Naive thymus-derived CD4-positive, alpha-beta T cell (primary cell): ENCODE measurements at regions of chr3 and their contacts with region 1.

Region 1: DNA sequence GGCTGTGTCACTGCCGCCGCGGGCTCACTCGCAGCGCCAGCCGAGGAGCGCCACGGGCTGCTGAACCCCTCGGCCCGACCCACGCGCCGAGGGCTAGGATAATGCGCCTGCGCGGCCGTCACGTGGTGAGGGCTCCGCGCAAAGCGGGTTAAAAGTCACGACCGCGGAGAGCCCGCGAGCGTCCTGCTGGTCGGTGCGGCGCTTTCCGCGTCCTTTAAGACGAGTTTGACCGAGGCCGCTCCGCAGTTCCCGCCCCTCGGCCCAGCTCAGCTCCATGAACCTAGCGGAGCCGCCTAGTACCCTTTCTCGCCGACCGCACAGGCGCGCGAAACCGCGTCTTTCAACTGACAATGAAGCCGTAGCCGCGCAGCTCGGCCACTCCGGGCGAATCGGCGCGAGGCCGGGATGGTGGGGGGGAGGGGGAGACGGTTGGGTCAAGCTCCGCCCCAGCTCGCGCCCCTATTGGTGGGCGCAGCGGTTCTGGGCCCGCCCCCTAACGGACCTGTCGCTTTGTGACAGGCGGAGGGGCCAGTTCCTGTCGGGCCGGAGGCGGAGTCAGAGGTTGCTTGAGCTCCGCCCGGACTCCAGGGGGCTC is 636 bp upstream of the STT3B start:
- DNase-seq: peak; percentile 96 to 99 (median 98)
- ATAC-seq: peak; percentile 91
- H3K4me3 ChIP-seq: peak overlapping the region; percentile 76
- H3K4me3 Mint-ChIP-seq: peak overlapping the region in 7 of 10 donors; percentile 96 to 100 (median 98)
- H3K27ac ChIP-seq: peak overlapping the region; percentile 94
- H3K27ac Mint-ChIP-seq: peak overlapping the region; percentile 95 to 99 (median 98)
- H3K4me1 ChIP-seq: peaks cover 4 to 31% of the 10 kb centered on the region in 2 donors
- H3K4me1 Mint-ChIP-seq: peaks cover 0 to 25% (median 18%) of the 10 kb centered on the region in 7 donors
- H3K27me3 ChIP-seq: no peaks in the 10 kb centered on the region
- H3K27me3 Mint-ChIP-seq: no peaks in the 10 kb centered on the region

Region 2: DNA sequence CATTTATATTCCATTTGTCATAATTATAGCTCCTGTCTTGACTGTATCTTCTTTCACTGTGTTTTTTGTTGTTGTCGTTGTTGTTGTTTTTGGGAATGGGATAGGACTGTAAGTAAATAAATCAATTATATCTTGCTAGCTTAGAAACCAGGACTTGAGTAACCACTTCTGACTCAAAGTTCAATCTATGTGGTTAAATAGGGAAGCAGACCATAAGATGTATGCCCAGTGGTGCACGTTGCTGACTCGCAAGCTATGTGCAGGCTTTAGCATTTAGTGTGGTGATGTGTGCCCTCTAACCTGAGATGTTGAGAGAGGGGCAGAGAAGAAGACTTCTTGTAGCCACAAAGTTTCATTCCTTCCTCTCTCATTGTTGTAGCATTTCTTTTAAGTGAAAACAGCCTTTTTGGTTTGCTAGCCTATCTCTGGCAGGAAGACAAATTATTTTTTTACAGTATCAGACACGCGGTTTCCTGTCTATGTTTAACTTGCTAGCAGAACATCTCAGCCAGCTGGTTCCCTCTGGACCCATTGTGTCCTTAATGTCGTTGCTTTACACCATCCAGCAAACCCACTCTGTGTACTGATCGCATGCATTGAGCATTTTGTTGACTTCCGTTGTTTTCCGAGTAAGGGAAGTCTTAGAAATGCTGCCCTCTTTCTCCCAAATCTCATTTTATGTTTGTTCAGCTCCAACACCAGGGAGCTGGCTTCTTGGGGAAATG is 873.6 kb before region 1 on chr3:
- CTCF ChIA-PET with region 1: no interaction called
- POLR2A ChIA-PET with region 1: interaction called, 3 read pairs
- intact Hi-C with region 1: loop called (anchors 5 kb)
- DNase-seq: peak in 7 of 9 donors; percentile 72 to 86 (median 84)
- ATAC-seq: peak; percentile 71
- H3K4me3 ChIP-seq: peak overlapping the region; percentile 24
- H3K4me3 Mint-ChIP-seq: peak overlapping the region; percentile 71 to 88 (median 80)
- H3K27ac ChIP-seq: peak overlapping the region; percentile 84
- H3K27ac Mint-ChIP-seq: peak overlapping the region; percentile 91 to 99 (median 97)
- H3K4me1 ChIP-seq: peaks cover 82 to 98% of the 10 kb centered on the region in 2 donors
- H3K4me1 Mint-ChIP-seq: peaks cover 67 to 100% (median 94%) of the 10 kb centered on the region in 7 donors
- H3K27me3 ChIP-seq: no peaks in the 10 kb centered on the region
- H3K27me3 Mint-ChIP-seq: no peaks in the 10 kb centered on the region

Region 3: GRCh38 chr3:31377045-31377642 is 154.9 kb before region 1 on chr3:
- CTCF ChIA-PET with region 1: no interaction called
- POLR2A ChIA-PET with region 1: no interaction called
- intact Hi-C with region 1: loop called in 1 of 2 experiments (anchors 2 kb)
- DNase-seq: peak in 5 of 9 donors; percentile 11 to 35 (median 26)
- ATAC-seq: peak; percentile 58
- H3K4me3 ChIP-seq: no peak overlapping the region
- H3K4me3 Mint-ChIP-seq: no peak overlapping the region
- H3K27ac ChIP-seq: no peak overlapping the region
- H3K27ac Mint-ChIP-seq: no peak overlapping the region
- H3K4me1 ChIP-seq: peaks cover 0 to 4% of the 10 kb centered on the region in 2 donors
- H3K4me1 Mint-ChIP-seq: peaks cover 0 to 26% (median 17%) of the 10 kb centered on the region in 7 donors
- H3K27me3 ChIP-seq: no peaks in the 10 kb centered on the region
- H3K27me3 Mint-ChIP-seq: no peaks in the 10 kb centered on the region

Region 4: DNA sequence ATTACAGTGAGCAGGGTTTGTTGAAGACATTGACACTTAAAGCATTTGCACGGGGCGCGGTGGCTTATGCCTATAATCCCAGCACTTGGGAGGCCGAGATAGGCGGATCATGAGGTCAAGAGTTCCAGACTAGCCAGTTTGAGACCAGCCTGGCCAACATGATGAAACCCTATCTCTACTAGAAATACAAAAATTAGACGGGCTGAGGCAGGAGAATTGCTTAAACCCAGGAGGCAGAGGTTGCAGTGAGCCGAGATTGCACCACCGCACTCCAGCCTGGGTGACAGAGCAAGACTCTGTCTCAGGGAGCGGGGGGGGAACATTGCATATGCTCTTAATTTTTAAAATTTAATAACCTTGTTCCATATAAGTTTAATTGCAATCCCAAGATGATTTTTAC is 12.5 kb after region 1 on chr3:
- CTCF ChIA-PET with region 1: interaction called, 11 read pairs
- POLR2A ChIA-PET with region 1: interaction called, 23 read pairs
- intact Hi-C with region 1: loop called in 1 of 2 experiments (anchors 1 kb)
- DNase-seq: no peak
- ATAC-seq: peak; percentile 33
- H3K4me3 ChIP-seq: no peak overlapping the region
- H3K4me3 Mint-ChIP-seq: peak overlapping the region in 9 of 10 donors; percentile 29 to 75 (median 70)
- H3K27ac ChIP-seq: peak overlapping the region; percentile 12
- H3K27ac Mint-ChIP-seq: peak overlapping the region in 8 of 9 donors; percentile 7 to 76 (median 44)
- H3K4me1 ChIP-seq: peaks cover 21 to 32% of the 10 kb centered on the region in 2 donors
- H3K4me1 Mint-ChIP-seq: peaks cover 55 to 99% (median 90%) of the 10 kb centered on the region in 7 donors
- H3K27me3 ChIP-seq: no peaks in the 10 kb centered on the region
- H3K27me3 Mint-ChIP-seq: no peaks in the 10 kb centered on the region

Region 5: DNA sequence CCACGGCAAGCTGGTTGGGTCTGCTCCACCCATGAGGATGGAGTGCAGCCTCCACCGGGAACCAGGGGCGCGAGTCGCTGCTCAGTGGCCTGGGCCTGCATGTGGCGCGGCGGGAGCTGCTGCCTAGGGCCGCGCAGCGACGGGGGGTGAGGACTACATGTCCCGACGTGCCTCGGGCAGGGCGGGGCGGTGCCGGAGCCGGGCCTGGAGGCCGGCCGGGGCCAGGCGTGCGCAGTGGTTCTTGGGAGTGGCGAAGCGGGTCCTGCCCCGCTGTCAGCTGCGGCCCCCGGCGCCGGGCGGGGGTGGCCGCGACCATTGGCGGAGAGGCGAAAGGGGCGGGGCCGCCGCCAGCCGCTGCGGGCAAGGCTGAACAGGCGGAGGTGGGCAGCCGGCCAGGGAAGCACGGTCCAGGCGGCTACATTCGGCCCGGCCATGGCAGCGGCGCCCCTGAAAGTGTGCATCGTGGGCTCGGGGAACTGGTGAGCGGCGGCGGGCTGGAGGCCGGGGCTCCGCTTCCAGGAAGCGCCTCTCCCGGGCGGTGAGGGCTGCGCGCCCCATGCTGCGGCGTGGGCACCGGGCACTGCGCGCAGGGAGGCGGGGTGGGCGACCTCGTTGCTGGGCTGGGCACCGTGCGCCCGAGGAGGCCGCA is 574.3 kb after region 1 on chr3 and contains the start of gene GPD1L:
- CTCF ChIA-PET with region 1: no interaction called
- POLR2A ChIA-PET with region 1: interaction called, 4 read pairs
- intact Hi-C with region 1: loop called (anchors 1 kb)
- DNase-seq: peak; percentile 75 to 96 (median 86)
- ATAC-seq: peak; percentile 99
- H3K4me3 ChIP-seq: peak within 1 kb of the TSS; percentile 77
- H3K4me3 Mint-ChIP-seq: peak within 1 kb of the TSS; percentile 86 to 97 (median 94)
- H3K27ac ChIP-seq: peak within 1 kb of the TSS; percentile 68
- H3K27ac Mint-ChIP-seq: peak within 1 kb of the TSS; percentile 77 to 96 (median 82)
- H3K4me1 ChIP-seq: peaks cover 14 to 15% of the 10 kb centered on the region in 2 donors
- H3K4me1 Mint-ChIP-seq: peaks cover 14 to 44% (median 39%) of the 10 kb centered on the region in 7 donors
- H3K27me3 ChIP-seq: no peaks in the 10 kb centered on the region
- H3K27me3 Mint-ChIP-seq: no peaks in the 10 kb centered on the region
- total RNA-seq, gene GPD1L: 14.1 to 23.8 (median 21.4) TPM

Region 6: DNA sequence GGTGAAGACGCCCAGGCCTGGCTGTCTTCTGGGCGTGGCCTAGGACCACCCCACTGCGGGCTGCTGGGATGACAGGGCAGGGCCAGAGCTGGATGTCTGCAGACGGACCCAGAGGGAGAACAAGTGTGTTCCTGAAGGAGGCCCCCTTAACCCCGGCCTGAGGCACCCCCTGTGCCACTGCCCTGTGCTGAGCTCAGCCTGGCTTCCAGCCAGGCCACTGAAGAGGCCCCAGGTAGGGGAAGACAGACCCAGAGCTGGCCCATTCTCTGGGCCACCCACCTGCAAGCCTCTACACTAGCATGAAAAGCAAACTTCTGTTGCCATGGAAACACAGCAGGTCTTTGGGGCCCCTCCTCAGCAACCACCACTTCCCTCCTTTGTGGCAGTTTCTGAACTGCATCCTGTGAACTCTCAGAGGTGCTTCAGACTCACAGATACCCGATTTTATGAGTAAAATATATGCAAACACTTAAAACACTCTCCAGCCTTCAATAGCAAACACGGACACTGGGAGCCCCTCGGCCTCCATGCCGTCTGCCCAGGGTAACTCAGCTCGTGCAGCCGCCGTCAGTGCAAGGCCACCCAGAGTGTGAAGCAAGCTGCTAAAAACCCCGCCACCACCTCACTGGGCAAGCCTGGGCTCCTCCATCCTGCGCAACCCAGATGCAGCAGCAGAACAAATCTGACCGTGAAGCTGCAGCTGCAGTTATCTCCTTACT is 928.1 kb after region 1 on chr3:
- CTCF ChIA-PET with region 1: no interaction called
- POLR2A ChIA-PET with region 1: no interaction called
- intact Hi-C with region 1: loop called (anchors 1 to 2 kb)
- DNase-seq: peak; percentile 52 to 95 (median 94)
- ATAC-seq: peak; percentile 87
- H3K4me3 ChIP-seq: peak overlapping the region; percentile 34
- H3K4me3 Mint-ChIP-seq: peak overlapping the region in 5 of 10 donors; percentile 25 to 92 (median 87)
- H3K27ac ChIP-seq: peak overlapping the region; percentile 97
- H3K27ac Mint-ChIP-seq: no peak overlapping the region
- H3K4me1 ChIP-seq: peaks cover 71 to 77% of the 10 kb centered on the region in 2 donors
- H3K4me1 Mint-ChIP-seq: peaks cover 30 to 45% (median 33%) of the 10 kb centered on the region in 7 donors
- H3K27me3 ChIP-seq: no peaks in the 10 kb centered on the region
- H3K27me3 Mint-ChIP-seq: no peaks in the 10 kb centered on the region